Right lobe of liver (tissue), 6 donors: ENCODE measurements at regions of chr2 and their contacts with region 1.

Region 1: DNA sequence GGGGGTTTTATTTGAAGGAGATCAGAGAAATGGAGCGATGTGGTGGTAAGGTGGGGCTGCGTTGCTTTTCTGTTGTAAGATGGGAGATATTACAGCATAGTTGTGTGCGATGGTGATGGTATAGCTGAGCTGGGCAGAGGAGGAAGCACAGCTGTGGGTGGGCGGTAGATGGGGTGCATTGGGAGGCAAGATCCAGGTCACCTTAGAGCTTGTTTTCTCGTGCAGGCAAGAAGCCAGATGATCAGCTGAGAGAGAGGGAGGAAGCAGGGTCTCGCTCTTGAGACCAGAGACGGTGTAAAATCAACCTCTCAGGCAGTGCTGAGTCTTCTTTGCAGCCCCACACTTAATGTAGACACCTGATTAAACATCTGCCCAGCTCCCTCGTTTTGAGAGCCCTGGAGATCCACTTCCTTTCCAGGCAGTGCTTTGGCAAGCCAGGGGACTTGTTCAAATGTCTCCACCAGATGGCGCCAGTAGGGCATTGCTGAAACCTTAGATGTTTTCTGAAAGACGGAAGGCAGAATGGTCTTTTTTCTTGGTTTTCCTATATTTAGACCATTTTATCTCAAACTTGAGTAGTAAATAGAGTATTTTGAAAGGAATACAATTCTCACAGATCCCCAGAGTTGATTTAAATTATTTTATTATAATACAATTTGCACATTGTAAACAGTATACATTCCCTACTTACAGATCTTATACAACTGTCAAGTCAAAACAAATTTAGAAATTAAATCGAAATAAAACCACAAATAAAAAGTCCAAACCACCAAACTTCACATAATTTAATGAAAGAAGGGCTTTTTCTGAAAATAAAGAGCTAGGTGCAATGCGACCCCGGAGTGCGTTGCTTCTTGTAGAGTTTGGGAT is 21.1 kb upstream of the LYPD6B start:
- DNase-seq: peak; percentile 67 to 76 (median 68)
- ATAC-seq: peak; percentile 85 to 92 (median 91)
- H3K4me3 ChIP-seq: no peak overlapping the region
- H3K27ac ChIP-seq: no peak overlapping the region
- H3K4me1 ChIP-seq: no peaks in the 10 kb centered on the region
- H3K27me3 ChIP-seq: no peaks in the 10 kb centered on the region
- CTCF ChIP-seq: peak; percentile 74 to 92 (median 91)
- POLR2A ChIP-seq: no peak

Region 2: GRCh38 chr2:149559341-149560068 is 542.2 kb after region 1 on chr2:
- intact Hi-C with region 1: loop called in 1 of 2 experiments (anchors 10 kb)
- DNase-seq: no peak
- ATAC-seq: no peak
- H3K4me3 ChIP-seq: no peak overlapping the region
- H3K27ac ChIP-seq: no peak overlapping the region
- H3K4me1 ChIP-seq: peaks cover 0 to 4% (median 0%) of the 10 kb centered on the region in 4 donors
- H3K27me3 ChIP-seq: no peaks in the 10 kb centered on the region
- CTCF ChIP-seq: no peak
- POLR2A ChIP-seq: no peak